Activated naive CD4-positive, alpha-beta T cell treated with anti-CD3 and anti-CD28 coated beads, Interleukin-2, amount 10 ng/mL, durations not matched to agents 7 days and 5 days (primary cell): ENCODE measurements at regions of chr22 and their contacts with region 1.

Region 1: GRCh38 chr22:50341977-50342650 is 1.0 kb upstream of the PPP6R2 start:
- DNase-seq: peak; percentile 93
- H3K4me3 Mint-ChIP-seq: peak overlapping the region; percentile 76
- H3K27ac Mint-ChIP-seq: peak overlapping the region; percentile 94
- H3K4me1 Mint-ChIP-seq: peaks cover 14% of the 10 kb centered on the region
- H3K27me3 Mint-ChIP-seq: no peaks in the 10 kb centered on the region

Region 2: DNA sequence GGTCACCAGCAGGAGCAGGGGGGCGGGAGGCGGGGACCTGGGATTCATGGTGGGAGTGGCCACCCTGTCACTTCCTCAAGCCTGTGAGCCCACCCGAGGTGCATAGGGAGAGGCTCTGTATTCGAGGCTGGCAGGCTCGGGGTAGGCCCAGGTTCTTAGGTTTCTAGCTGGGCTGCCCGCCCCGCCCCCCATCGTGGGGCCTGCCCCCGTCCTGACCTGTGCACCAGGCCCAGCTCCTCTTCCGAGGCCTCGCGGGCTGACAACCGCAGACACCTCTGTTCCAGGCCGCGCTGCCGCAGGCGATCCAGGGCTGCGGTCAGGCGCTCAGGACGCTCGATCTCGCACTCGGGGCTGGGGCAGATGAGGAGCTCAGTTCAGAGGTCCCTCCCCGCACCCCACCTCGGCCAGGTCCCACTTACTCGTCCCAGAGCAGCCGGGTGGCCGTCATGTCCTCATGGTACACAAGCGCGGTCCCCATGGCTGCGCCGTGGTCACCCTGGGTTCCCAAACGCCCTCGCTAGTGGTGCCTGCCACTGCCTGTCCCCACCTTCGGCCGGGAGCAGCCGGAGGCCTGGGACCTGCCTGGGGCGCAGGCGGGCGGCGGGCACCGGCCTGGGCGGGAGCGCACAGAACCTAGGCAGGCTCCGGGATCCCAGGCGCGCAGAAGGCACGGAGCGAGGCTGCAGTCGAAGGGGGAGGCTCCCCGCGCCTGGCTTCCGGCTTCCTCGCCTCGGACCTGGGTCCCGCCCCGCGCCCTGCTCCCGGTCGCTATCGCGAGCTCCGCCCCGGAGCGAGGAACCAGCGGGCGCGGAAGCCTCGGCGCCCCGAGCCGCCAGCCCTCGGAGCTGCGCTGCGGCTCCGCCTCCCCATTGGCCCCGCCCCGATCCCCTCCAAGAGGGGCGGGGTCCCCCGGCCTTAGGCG is 91.3 kb before region 1 on chr22 and contains the start of gene HDAC10:
- CTCF ChIA-PET with region 1: interaction called, 16 read pairs
- DNase-seq: peak; percentile 93
- H3K4me3 Mint-ChIP-seq: peak within 1 kb of the TSS; percentile 81
- H3K27ac Mint-ChIP-seq: peak within 1 kb of the TSS; percentile 83
- H3K4me1 Mint-ChIP-seq: peaks cover 32% of the 10 kb centered on the region
- H3K27me3 Mint-ChIP-seq: no peaks in the 10 kb centered on the region

Region 3: GRCh38 chr22:50276143-50276542 is 66.0 kb before region 1 on chr22:
- CTCF ChIA-PET with region 1: interaction called, 30 read pairs
- DNase-seq: peak; percentile 63
- H3K4me3 Mint-ChIP-seq: no peak overlapping the region
- H3K27ac Mint-ChIP-seq: no peak overlapping the region
- H3K4me1 Mint-ChIP-seq: peaks cover under 1% of the 10 kb centered on the region
- H3K27me3 Mint-ChIP-seq: peaks cover 31% of the 10 kb centered on the region

Region 4: DNA sequence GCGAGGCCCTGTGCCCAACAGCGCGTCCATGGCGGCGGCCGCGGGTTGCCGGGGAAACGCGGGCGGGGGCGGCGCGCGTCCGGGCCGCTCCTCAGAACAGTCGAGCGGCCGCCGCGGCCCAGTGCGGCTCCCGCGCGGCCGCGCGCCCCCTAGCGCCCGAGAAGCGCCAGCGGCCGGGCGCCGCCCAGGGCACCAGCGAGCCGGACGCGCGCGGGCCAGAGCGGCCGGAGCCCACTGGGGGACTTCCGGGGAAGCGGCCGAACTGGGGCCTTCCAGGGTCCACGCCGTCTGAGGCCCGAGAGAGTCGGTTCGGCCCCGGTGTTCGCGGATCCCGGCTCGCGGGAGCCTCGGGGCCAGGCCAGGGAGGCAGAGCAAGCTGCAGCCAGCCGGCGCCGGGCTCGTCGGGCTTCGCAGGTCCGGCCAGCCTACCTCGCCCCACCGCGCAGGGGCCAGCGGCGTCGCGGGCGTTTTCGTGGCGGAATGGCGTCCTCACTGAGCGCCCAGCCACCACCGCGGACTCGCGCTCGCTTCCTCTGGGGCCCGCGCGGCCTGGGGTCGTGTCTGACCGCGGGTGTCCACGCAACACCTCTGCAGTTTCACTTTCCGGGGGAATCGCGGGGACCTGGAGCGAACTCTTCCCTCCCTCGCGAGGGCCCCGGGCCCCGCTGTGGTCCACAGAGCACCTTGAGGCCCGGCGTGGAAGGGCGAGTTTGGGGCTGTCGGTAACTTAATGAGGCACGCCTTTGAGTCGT is 15.0 kb before region 1 on chr22 and contains the start of gene DENND6B:
- CTCF ChIA-PET with region 1: interaction called, 23 read pairs
- DNase-seq: peak; percentile 74
- H3K4me3 Mint-ChIP-seq: peak within 1 kb of the TSS; percentile 79
- H3K27ac Mint-ChIP-seq: peak within 1 kb of the TSS; percentile 55
- H3K4me1 Mint-ChIP-seq: peaks cover 13% of the 10 kb centered on the region
- H3K27me3 Mint-ChIP-seq: peaks cover 58% of the 10 kb centered on the region

Region 5: GRCh38 chr22:50439871-50440331 is 97.8 kb after region 1 on chr22:
- CTCF ChIA-PET with region 1: no interaction called
- DNase-seq: no peak
- H3K4me3 Mint-ChIP-seq: no peak overlapping the region
- H3K27ac Mint-ChIP-seq: no peak overlapping the region
- H3K4me1 Mint-ChIP-seq: peaks cover 2% of the 10 kb centered on the region
- H3K27me3 Mint-ChIP-seq: no peaks in the 10 kb centered on the region